Head of caudate nucleus (tissue), 42 donors: ENCODE measurements at regions of chr15 and their contacts with region 1.

Region 1: DNA sequence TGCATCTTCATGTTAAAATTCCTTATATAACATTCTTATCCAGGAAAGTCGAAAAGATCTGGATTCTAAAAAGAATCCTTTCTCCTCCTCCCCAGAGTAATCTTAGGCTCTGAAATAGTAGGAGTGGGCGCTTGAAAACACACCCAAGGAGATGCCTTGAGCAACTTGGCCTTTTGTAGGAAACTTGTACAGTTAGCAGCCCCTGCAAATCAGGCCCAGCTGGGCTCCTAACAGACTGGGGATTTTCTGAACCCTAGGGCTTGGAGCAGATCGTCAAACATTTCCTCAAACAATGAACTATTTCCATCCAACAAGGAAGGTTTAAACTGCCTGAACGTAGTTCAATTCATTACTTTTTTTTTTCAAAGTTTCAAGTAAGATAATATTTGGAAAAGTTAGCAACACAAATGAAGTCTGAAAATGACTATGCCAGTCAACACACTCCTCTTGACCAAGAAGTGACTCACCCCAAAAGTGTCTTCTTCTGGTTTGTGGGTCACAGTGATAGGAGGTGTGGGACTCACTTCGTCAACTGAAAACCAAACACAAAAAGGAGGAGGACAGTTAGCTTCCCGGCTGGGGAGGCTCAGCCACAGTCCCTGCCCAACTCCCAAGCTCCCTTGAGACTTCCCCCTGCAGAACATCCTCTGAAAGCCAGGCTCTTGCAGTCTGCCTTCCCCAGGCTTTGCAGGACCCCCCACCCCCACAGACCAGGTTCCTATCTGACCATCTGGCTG is 129.7 kb downstream of the NTRK3 start:
- DNase-seq: peak in 5 of 42 donors; percentile 21 to 64 (median 43)

Region 2: GRCh38 chr15:88246666-88247446 is 120.0 kb after region 1 on chr15:
- intact Hi-C with region 1: loop called (anchors 10 kb)
- DNase-seq: peak; percentile 60 to 94 (median 84)